Naive thymus-derived CD4-positive, alpha-beta T cell (primary cell): ENCODE measurements at regions of chr17 and their contacts with region 1.

Region 1: GRCh38 chr17:1298606-1299005 is 19.1 kb downstream of the TRARG1 start:
- DNase-seq: peak; percentile 27 to 58 (median 48)
- ATAC-seq: peak; percentile 42
- H3K4me3 ChIP-seq: peak overlapping the region; percentile 40
- H3K4me3 Mint-ChIP-seq: peak overlapping the region; percentile 33 to 71 (median 64)
- H3K27ac ChIP-seq: no peak overlapping the region
- H3K27ac Mint-ChIP-seq: no peak overlapping the region
- H3K4me1 ChIP-seq: peaks cover 34 to 56% of the 10 kb centered on the region in 2 donors
- H3K4me1 Mint-ChIP-seq: peaks cover 11 to 59% (median 51%) of the 10 kb centered on the region in 7 donors
- H3K27me3 ChIP-seq: no peaks in the 10 kb centered on the region
- H3K27me3 Mint-ChIP-seq: peaks cover 0 to 5% (median 0%) of the 10 kb centered on the region in 5 donors

Region 2: GRCh38 chr17:1260086-1260769 is 38.4 kb before region 1 on chr17:
- CTCF ChIA-PET with region 1: no interaction called
- POLR2A ChIA-PET with region 1: no interaction called
- intact Hi-C with region 1: loop called in 1 of 2 experiments (anchors 1 kb)
- DNase-seq: no peak
- ATAC-seq: no peak
- H3K4me3 ChIP-seq: no peak overlapping the region
- H3K4me3 Mint-ChIP-seq: peak overlapping the region in 9 of 10 donors; percentile 11 to 81 (median 56)
- H3K27ac ChIP-seq: no peak overlapping the region
- H3K27ac Mint-ChIP-seq: no peak overlapping the region
- H3K4me1 ChIP-seq: peaks cover 11 to 14% of the 10 kb centered on the region in 2 donors
- H3K4me1 Mint-ChIP-seq: peaks cover 4 to 32% (median 22%) of the 10 kb centered on the region in 7 donors
- H3K27me3 ChIP-seq: peaks cover 3 to 10% of the 10 kb centered on the region in 2 donors
- H3K27me3 Mint-ChIP-seq: peaks cover 26 to 59% (median 29%) of the 10 kb centered on the region in 5 donors

Region 3: DNA sequence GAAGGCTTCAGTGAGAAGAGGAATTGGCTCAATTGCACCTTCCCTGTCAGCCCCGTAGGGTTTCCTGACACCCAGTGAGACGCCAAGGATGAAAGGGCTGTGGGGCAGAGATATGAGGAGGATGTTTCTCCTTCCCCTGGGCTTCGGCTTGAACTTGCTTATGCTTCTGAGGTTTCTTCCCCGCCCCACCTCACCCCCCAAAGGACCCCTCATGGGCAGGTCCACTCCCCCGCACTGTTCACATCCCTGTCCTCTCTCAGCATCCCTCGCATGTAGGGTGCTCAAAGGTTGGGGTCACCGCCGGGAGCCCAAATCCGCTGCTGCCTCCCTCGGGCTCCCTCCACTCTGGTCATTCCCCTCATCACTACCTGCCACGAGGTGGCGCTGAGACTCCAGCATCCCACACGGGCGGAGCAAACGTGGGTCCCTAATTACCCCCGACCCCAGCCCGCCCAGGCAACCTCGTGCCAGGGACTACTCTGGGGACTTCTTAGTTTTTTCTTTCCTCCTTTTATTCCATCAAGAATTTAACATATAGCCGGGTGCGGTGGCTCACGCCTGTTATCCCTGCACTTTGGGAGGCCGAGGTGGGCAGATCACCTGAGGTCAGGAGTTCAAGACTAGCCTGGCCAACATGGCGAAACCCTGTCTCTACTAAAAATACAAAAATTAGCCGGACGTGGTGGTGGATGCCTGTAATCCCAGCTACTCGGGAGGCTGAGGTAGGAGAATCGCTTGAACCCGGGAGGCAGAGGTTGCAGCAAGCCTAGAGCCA is 22.5 kb before region 1 on chr17:
- CTCF ChIA-PET with region 1: interaction called, 8 read pairs
- POLR2A ChIA-PET with region 1: no interaction called
- intact Hi-C with region 1: loop called in 1 of 2 experiments (anchors 2 kb)
- DNase-seq: peak; percentile 45 to 79 (median 68)
- ATAC-seq: peak; percentile 89
- H3K4me3 ChIP-seq: no peak overlapping the region
- H3K4me3 Mint-ChIP-seq: peak overlapping the region in 7 of 10 donors; percentile 30 to 72 (median 52)
- H3K27ac ChIP-seq: no peak overlapping the region
- H3K27ac Mint-ChIP-seq: peak overlapping the region in 4 of 9 donors; percentile 10 to 77 (median 48)
- H3K4me1 ChIP-seq: peaks cover 4 to 5% of the 10 kb centered on the region in 2 donors
- H3K4me1 Mint-ChIP-seq: peaks cover 0 to 12% (median 8%) of the 10 kb centered on the region in 7 donors
- H3K27me3 ChIP-seq: peaks cover 0 to 5% of the 10 kb centered on the region in 2 donors
- H3K27me3 Mint-ChIP-seq: peaks cover 25 to 39% (median 35%) of the 10 kb centered on the region in 5 donors

Region 4: DNA sequence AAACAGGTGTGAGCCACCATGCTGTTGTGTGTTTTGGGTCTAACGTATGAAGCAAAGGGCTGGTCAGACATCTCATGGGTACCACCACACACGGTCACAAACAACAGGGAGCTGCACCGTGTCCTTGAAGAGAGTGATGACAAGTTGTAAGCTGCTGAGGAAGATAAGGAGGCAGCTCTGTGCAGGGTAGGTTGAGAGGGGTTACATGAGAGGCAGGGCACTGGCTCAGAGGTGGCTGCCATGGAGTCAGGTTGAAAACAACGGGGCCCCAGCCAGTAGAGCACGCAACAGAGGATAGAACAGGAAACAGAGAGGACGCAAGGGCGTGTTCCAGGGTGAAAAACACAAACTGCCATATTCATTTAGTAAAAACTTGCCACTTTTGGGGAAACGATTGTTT is 33.1 kb after region 1 on chr17:
- CTCF ChIA-PET with region 1: no interaction called
- POLR2A ChIA-PET with region 1: no interaction called
- intact Hi-C with region 1: loop called (anchors 2 to 5 kb)
- DNase-seq: peak in 7 of 9 donors; percentile 48 to 76 (median 56)
- ATAC-seq: peak; percentile 83
- H3K4me3 ChIP-seq: no peak overlapping the region
- H3K4me3 Mint-ChIP-seq: peak overlapping the region in 9 of 10 donors; percentile 10 to 80 (median 55)
- H3K27ac ChIP-seq: no peak overlapping the region
- H3K27ac Mint-ChIP-seq: peak overlapping the region in 6 of 9 donors; percentile 1 to 85 (median 66)
- H3K4me1 ChIP-seq: peaks cover 0 to 12% of the 10 kb centered on the region in 2 donors
- H3K4me1 Mint-ChIP-seq: peaks cover 4 to 15% (median 12%) of the 10 kb centered on the region in 7 donors
- H3K27me3 ChIP-seq: no peaks in the 10 kb centered on the region
- H3K27me3 Mint-ChIP-seq: no peaks in the 10 kb centered on the region